IMR-90 (cell line): ENCODE measurements at regions of chr1 and their contacts with region 1.

Region 1: GRCh38 chr1:216221260-216221700 is 202.0 kb downstream of the USH2A start:
- DNase-seq: peak; percentile 86
- ATAC-seq: peak; percentile 94
- H3K4me3 ChIP-seq: peak overlapping the region; percentile 76
- H3K27ac ChIP-seq: peak overlapping the region; percentile 82
- H3K4me1 ChIP-seq: peaks cover 4% of the 10 kb centered on the region; the same call in 1 of the 2 replicates
- H3K27me3 ChIP-seq: no peaks in the 10 kb centered on the region
- CTCF ChIP-seq: peak; percentile 83
- POLR2A ChIP-seq: no peak
- RAD21 ChIP-seq: peak; percentile 70

Region 2: DNA sequence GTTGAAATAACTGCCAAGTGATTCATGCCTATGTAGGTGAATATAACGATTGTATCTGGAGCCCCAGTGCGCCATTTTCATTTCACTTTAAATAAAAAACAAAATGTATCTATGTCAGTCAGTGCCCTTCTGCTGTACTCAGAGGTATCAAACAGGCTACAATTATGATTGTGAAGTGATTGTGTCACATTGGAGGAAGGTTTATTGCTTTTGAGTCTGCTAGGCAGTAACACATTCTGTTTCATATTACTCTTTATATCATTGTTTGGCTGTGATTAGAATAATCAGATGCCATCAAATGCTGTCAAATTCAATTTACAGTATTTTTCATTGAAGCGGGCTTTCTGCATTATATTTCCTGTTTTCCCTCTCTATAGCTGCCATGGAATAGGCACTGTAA is 482.3 kb before region 1 on chr1:
- CTCF ChIA-PET with region 1: no interaction called
- POLR2A ChIA-PET with region 1: no interaction called
- dilution Hi-C with region 1: no loop called
- in situ Hi-C with region 1: no loop called
- intact Hi-C with region 1: no loop called
- DNase-seq: no peak
- ATAC-seq: no peak
- H3K4me3 ChIP-seq: no peak overlapping the region
- H3K27ac ChIP-seq: no peak overlapping the region
- H3K4me1 ChIP-seq: no peaks in the 10 kb centered on the region; the same call in 1 of the 2 replicates
- H3K27me3 ChIP-seq: no peaks in the 10 kb centered on the region
- CTCF ChIP-seq: no peak
- POLR2A ChIP-seq: no peak
- RAD21 ChIP-seq: no peak

Region 3: GRCh38 chr1:215780131-215780530 is 441.1 kb before region 1 on chr1:
- CTCF ChIA-PET with region 1: no interaction called
- POLR2A ChIA-PET with region 1: no interaction called
- dilution Hi-C with region 1: no loop called
- in situ Hi-C with region 1: no loop called
- intact Hi-C with region 1: no loop called
- DNase-seq: no peak
- ATAC-seq: no peak
- H3K4me3 ChIP-seq: no peak overlapping the region
- H3K27ac ChIP-seq: no peak overlapping the region
- H3K4me1 ChIP-seq: peaks cover 3% of the 10 kb centered on the region; the same call in 1 of the 2 replicates
- H3K27me3 ChIP-seq: no peaks in the 10 kb centered on the region
- CTCF ChIP-seq: no peak
- POLR2A ChIP-seq: no peak
- RAD21 ChIP-seq: no peak

Region 4: DNA sequence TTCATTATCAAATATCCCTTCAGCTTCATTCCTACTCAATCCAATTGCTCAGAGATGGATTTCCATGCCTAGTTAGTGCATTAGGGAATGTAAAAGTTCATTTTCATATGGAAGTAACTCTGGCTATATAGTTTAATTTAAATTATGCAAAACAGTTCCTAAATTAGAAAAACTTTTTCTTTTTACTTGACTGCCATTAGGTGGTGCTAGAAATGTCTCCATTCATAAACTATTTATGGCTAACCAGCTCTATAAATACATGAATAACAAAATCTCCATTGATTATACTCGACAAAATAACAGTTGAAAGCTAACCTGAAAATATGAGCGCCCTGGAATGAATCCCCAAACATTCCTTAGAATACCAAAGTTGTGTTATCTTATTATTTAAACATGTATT is 109.4 kb before region 1 on chr1:
- CTCF ChIA-PET with region 1: interaction called, 9 read pairs
- POLR2A ChIA-PET with region 1: no interaction called
- dilution Hi-C with region 1: no loop called
- in situ Hi-C with region 1: no loop called
- intact Hi-C with region 1: loop called (anchors 2 kb)
- DNase-seq: peak; percentile 7
- ATAC-seq: no peak
- H3K4me3 ChIP-seq: no peak overlapping the region
- H3K27ac ChIP-seq: no peak overlapping the region
- H3K4me1 ChIP-seq: no peaks in the 10 kb centered on the region
- H3K27me3 ChIP-seq: no peaks in the 10 kb centered on the region
- CTCF ChIP-seq: peak; percentile 49
- POLR2A ChIP-seq: no peak
- RAD21 ChIP-seq: peak; percentile 30; the same call in 1 of the 2 replicates

Region 5: DNA sequence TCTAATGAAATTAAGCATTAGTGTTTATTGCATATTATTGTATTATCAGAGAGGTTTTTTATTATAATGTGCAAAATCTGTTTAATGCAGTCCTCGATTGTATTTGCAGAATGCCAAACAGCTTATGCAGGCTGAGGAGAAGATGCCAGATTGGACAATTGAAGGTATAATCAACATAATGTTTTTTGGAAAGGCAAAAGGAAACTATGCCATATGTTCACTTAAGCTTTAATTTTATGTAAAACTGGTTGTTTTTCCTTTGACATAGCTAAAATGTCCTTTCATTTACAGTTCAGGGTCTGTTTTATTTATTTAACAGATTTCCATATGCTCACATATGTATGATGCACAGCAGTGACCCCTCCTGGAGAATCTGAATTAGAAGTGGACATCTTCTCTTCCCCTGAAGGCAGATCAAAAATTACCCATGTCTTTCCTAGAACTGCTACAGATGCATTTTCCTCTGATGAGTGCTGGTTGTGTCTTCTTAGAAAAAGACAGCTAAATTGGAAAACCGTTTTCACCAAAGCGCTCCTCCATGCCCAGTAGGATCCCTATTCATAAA is 345.4 kb after region 1 on chr1:
- CTCF ChIA-PET with region 1: interaction called, 4 read pairs
- POLR2A ChIA-PET with region 1: no interaction called
- dilution Hi-C with region 1: no loop called
- in situ Hi-C with region 1: no loop called
- intact Hi-C with region 1: loop called (anchors 1 kb)
- DNase-seq: peak; percentile 45
- ATAC-seq: peak; percentile 62
- H3K4me3 ChIP-seq: no peak overlapping the region
- H3K27ac ChIP-seq: no peak overlapping the region
- H3K4me1 ChIP-seq: no peaks in the 10 kb centered on the region
- H3K27me3 ChIP-seq: no peaks in the 10 kb centered on the region
- CTCF ChIP-seq: peak; percentile 56
- POLR2A ChIP-seq: no peak
- RAD21 ChIP-seq: peak; percentile 56

Region 6: DNA sequence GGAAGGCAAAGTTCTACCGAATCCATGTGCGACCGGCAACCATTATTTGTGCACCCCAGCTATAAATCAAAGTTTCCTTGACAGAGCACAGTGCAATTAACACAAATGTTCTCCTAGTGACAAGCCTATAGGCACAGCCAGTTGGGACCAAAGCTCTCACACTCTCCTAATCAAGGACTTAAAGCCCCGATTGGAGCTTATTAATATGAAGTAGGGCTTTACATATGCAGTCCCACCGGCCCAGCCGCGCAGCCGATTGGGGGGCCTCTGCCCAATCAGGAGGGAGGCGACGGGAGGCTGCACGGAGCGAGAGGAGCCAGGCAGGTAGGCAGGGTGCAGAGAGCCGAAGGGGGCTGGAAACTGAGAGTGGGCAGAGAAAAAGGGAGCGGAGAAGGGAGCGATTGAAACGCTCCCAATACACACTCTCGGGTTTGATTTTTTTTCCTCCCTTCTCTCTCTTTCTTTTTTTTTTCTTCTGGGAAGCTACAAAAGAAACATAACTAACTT is 502.0 kb after region 1 on chr1 and contains the start of gene ESRRG:
- CTCF ChIA-PET with region 1: no interaction called
- POLR2A ChIA-PET with region 1: no interaction called
- dilution Hi-C with region 1: no loop called
- in situ Hi-C with region 1: no loop called
- intact Hi-C with region 1: loop called (anchors 5 kb)
- DNase-seq: peak; percentile 17
- ATAC-seq: peak; percentile 93
- H3K4me3 ChIP-seq: peak within 1 kb of the TSS; percentile 37
- H3K27ac ChIP-seq: no peak within 1 kb of the TSS
- H3K4me1 ChIP-seq: peaks cover 2% of the 10 kb centered on the region; the same call in 1 of the 2 replicates
- H3K27me3 ChIP-seq: no peaks in the 10 kb centered on the region
- CTCF ChIP-seq: no peak
- POLR2A ChIP-seq: no peak
- RAD21 ChIP-seq: no peak
- total RNA-seq, gene ESRRG: 0.54 and 0.56 TPM in 2 replicates

Region 7: GRCh38 chr1:216742625-216743024 is 521.3 kb after region 1 on chr1:
- CTCF ChIA-PET with region 1: no interaction called
- POLR2A ChIA-PET with region 1: no interaction called
- dilution Hi-C with region 1: no loop called
- in situ Hi-C with region 1: no loop called
- intact Hi-C with region 1: loop called (anchors 5 kb)
- DNase-seq: peak; percentile 30
- ATAC-seq: no peak
- H3K4me3 ChIP-seq: no peak overlapping the region
- H3K27ac ChIP-seq: no peak overlapping the region
- H3K4me1 ChIP-seq: no peaks in the 10 kb centered on the region
- H3K27me3 ChIP-seq: no peaks in the 10 kb centered on the region
- CTCF ChIP-seq: peak; percentile 53
- POLR2A ChIP-seq: no peak
- RAD21 ChIP-seq: peak; percentile 36